OCI-LY7 (cell line): ENCODE measurements at regions of chr10 and their contacts with region 1.

Region 1: GRCh38 chr10:56679578-56679977 is 318.5 kb upstream of the ZWINT start:
- DNase-seq: no peak
- H3K4me3 ChIP-seq: no peak overlapping the region
- H3K27ac ChIP-seq: no peak overlapping the region
- H3K4me1 ChIP-seq: no peaks in the 10 kb centered on the region
- CTCF ChIP-seq: no peak

Region 2: DNA sequence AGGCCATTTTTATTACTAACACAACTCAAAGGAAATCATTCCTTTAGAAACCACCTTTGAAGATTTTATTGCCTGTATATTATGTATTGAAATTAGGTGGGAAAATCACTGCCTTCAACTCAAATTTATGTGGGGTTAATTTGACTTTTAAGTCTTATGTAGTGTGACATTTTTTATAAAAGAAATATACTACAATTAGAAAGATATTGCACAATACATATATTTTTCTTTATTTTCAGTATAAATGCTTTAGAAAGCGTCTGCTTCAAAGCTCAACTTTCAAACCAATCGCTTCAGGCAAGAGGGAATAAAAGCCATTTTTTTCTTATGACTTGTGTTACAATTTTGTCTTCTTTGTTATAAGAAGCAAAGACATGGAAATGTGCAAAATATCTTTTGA is 18.9 kb after region 1 on chr10:
- CTCF ChIA-PET with region 1: no interaction called
- POLR2A ChIA-PET with region 1: interaction called, 10 read pairs
- intact Hi-C with region 1: no loop called
- DNase-seq: no peak
- H3K4me3 ChIP-seq: no peak overlapping the region
- H3K27ac ChIP-seq: no peak overlapping the region
- H3K4me1 ChIP-seq: no peaks in the 10 kb centered on the region
- CTCF ChIP-seq: no peak